OCI-LY7 (cell line): ENCODE measurements at regions of chr1 and their contacts with region 1.

Region 1: GRCh38 chr1:234499119-234499942 is 20.4 kb upstream of the TARBP1 start:
- DNase-seq: peak; percentile 88
- H3K4me3 ChIP-seq: no peak overlapping the region
- H3K27ac ChIP-seq: no peak overlapping the region
- H3K4me1 ChIP-seq: peaks cover 41% of the 10 kb centered on the region
- CTCF ChIP-seq: peak; percentile 97

Region 2: GRCh38 chr1:234515821-234516241 is 16.5 kb after region 1 on chr1:
- CTCF ChIA-PET with region 1: interaction called, 5 read pairs
- POLR2A ChIA-PET with region 1: interaction called, 10 read pairs
- intact Hi-C with region 1: no loop called
- DNase-seq: no peak
- H3K4me3 ChIP-seq: no peak overlapping the region
- H3K27ac ChIP-seq: no peak overlapping the region
- H3K4me1 ChIP-seq: peaks cover 51% of the 10 kb centered on the region
- CTCF ChIP-seq: no peak

Region 3: GRCh38 chr1:234521807-234522195 is 22.5 kb after region 1 on chr1:
- CTCF ChIA-PET with region 1: interaction called, 5 read pairs
- POLR2A ChIA-PET with region 1: interaction called, 10 read pairs
- intact Hi-C with region 1: loop called (anchors 1 kb)
- DNase-seq: no peak
- H3K4me3 ChIP-seq: no peak overlapping the region
- H3K27ac ChIP-seq: peak overlapping the region; percentile 91
- H3K4me1 ChIP-seq: peaks cover 86% of the 10 kb centered on the region
- CTCF ChIP-seq: no peak

Region 4: GRCh38 chr1:234599617-234600417 is 100.5 kb after region 1 on chr1:
- CTCF ChIA-PET with region 1: interaction called, 4 read pairs
- POLR2A ChIA-PET with region 1: interaction called, 12 read pairs
- intact Hi-C with region 1: loop called (anchors 1 kb)
- DNase-seq: peak; percentile 88
- H3K4me3 ChIP-seq: peak overlapping the region; percentile 69
- H3K27ac ChIP-seq: peak overlapping the region; percentile 93
- H3K4me1 ChIP-seq: peaks cover 69% of the 10 kb centered on the region
- CTCF ChIP-seq: 0 out of 2 replicates have a peak, but pooled peaks have one; percentile 15

Region 5: GRCh38 chr1:234722904-234723720 is 223.8 kb after region 1 on chr1:
- CTCF ChIA-PET with region 1: interaction called, 3 read pairs
- POLR2A ChIA-PET with region 1: interaction called, 5 read pairs
- intact Hi-C with region 1: loop called (anchors 5 kb)
- DNase-seq: peak; percentile 10
- H3K4me3 ChIP-seq: peak overlapping the region; percentile 27
- H3K27ac ChIP-seq: peak overlapping the region; percentile 65
- H3K4me1 ChIP-seq: peaks cover 50% of the 10 kb centered on the region
- CTCF ChIP-seq: no peak

Region 6: GRCh38 chr1:234772345-234773147 is 273.2 kb after region 1 on chr1:
- CTCF ChIA-PET with region 1: no interaction called
- POLR2A ChIA-PET with region 1: interaction called, 5 read pairs
- intact Hi-C with region 1: loop called (anchors 5 kb)
- DNase-seq: peak; percentile 88
- H3K4me3 ChIP-seq: peak overlapping the region; percentile 39
- H3K27ac ChIP-seq: peak overlapping the region; percentile 66
- H3K4me1 ChIP-seq: peaks cover 33% of the 10 kb centered on the region
- CTCF ChIP-seq: no peak

Region 7: DNA sequence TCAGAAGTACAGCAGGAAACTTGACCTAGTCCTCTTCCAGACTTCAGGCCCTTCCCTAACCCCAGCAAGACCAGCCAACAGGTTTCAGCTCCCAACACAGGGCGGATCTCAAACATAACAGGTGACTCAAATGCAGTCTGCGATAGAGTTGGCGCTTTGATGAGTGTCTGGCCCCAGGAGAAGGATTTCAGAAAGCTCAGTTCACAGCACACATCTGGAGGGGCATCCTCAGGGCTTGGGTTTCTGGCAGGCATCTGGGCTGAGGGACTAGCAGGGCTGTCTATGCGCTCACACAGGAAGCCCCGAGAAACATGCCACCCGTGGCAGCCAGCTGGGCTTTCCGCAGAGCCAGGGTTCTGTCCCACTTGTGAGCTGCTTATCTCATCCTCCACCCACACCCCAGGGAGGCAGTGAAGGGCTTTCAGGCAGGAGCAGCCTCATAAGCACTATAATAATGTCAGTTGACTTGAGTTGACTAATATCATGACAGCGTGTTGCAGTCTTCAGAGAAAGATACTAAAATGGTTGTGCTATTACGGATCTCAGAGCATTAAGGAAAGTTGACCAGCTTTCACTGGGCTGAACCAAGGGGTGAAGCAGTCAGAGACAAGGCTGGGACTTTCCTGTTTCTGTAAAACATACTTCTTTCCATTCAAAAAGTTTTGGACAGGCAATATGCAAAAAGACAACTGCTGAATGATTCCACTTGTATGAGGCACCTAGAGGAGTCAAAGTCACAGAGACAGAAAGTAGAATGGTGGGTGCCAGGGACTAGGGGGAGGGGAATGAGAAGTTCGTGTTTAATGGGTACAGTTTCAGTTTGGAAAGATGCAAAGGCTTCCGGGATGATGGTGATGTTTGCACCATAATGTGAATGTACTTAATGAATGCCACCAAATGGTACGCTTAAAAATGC is 343.7 kb after region 1 on chr1:
- CTCF ChIA-PET with region 1: no interaction called
- POLR2A ChIA-PET with region 1: no interaction called
- intact Hi-C with region 1: loop called (anchors 5 kb)
- DNase-seq: peak; percentile 66
- H3K4me3 ChIP-seq: peak overlapping the region; percentile 18
- H3K27ac ChIP-seq: peak overlapping the region; percentile 52
- H3K4me1 ChIP-seq: peaks cover 62% of the 10 kb centered on the region
- CTCF ChIP-seq: 0 out of 2 replicates have a peak, but pooled peaks have one; percentile 21